ENCODE measurements at regions of chr17 and their contacts with region 1.

Region 1: GRCh38 chr17:78947235-78948127 is 22.3 kb upstream of the TIMP2 start:
- DNase-seq: no peak
- H3K4me3 ChIP-seq: no peak overlapping the region
- CTCF ChIP-seq: no peak

Region 2: DNA sequence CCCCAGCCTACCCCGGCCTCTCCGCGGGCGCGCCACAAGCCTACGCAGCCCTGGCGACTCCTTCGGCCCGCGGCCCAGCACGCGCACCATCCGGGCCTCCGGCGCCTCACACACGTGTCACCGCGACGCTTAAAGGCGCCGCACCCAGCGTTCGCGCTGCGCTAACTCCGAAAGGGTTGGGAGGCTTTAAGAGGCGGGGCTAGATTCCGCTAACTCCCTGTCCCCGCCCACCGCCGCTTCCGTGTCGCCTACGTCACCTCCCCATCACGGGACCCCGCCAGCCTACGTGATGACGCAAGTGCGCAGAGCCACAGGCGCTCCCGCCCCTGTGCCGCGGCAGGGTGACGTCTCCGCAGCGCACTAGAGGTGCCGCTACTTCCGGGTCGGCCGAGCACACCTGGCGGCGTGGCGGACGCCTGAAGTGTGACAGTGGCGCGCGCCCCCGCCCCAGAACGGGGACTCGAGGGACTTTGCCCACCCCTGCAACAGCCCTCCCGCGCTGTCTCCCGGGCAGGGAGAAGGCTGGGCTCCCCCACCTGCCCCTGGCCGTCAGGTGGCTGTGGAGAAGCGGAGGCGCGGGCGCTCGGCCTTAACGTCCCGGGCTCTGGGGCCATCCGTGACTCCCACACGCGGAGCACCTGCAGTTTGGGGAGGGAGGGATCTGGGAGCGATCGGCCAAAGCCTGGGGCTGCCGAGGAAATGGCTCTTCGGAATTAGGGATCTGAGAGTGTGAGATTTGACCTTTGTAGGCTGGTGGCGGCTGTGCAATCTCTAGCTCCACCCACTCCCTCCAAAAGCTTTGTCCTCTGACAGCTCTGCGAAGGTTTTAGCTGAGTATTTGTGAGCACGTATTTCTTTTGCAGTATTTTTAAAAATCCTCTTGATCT is 106.5 kb before region 1 on chr17 and contains the start of gene USP36:
- in situ Hi-C with region 1: loop called (anchors 5 kb)
- DNase-seq: peak; percentile 98
- H3K4me3 ChIP-seq: peak within 1 kb of the TSS; percentile 71
- CTCF ChIP-seq: no peak